Right cardiac atrium (tissue), 5 donors: ENCODE measurements at regions of chr2 and their contacts with region 1.

Region 1: DNA sequence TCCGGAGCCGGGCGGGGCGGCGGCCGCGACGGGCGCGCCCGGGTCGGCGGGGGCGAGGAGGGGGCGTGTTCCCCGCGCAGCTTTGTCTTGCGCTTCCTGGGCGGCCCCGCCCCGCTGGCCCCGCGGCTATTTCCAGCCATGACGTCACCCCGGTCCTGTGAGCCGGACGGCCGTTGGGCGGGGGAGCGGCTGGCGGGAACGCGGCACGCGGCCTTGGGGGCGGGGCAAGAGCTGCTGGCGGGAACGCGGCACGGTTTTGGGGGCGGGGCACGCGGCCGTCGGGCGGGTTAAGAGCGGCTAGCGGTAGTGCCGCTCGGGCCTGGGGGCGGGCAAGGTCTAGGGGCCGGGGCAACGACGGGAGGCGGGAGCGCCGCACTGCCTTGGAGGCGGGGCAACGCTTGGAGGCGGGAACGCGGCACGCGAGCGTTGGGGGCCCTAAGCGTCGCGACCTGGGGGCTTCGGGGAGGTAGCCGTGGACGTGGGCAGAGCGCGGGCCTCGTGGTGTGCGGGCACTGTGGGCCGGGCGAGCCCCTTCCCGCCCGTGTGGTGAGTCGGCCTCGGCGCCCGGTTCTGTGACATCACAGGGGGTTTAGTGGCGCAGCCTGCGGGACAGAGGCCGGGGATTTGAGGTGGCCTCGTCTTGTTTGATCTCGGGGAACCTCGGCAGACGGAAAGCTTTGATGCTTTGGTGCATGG is 704 bp downstream of the KLF11 start:
- DNase-seq: peak; percentile 99 to 100 (median 100)
- ATAC-seq: peak; percentile 85
- H3K4me3 ChIP-seq: peak overlapping the region; percentile 97
- H3K27ac ChIP-seq: peak overlapping the region; percentile 100
- H3K4me1 ChIP-seq: peaks cover 14% of the 10 kb centered on the region
- H3K27me3 ChIP-seq: no peaks in the 10 kb centered on the region

Region 2: GRCh38 chr2:9813312-9814133 is 230.5 kb before region 1 on chr2:
- intact Hi-C with region 1: loop called in 3 of 4 experiments (anchors 5 to 10 kb)
- DNase-seq: peak; percentile 74 to 91 (median 91)
- ATAC-seq: peak; percentile 80 to 88
- H3K4me3 ChIP-seq: no peak overlapping the region
- H3K27ac ChIP-seq: no peak overlapping the region
- H3K4me1 ChIP-seq: no peaks in the 10 kb centered on the region
- H3K27me3 ChIP-seq: no peaks in the 10 kb centered on the region

Region 3: GRCh38 chr2:9984217-9984739 is 59.8 kb before region 1 on chr2:
- intact Hi-C with region 1: loop called in 2 of 4 experiments (anchors 2 to 5 kb)
- DNase-seq: no peak
- ATAC-seq: peak; percentile 48 to 60
- H3K4me3 ChIP-seq: no peak overlapping the region
- H3K27ac ChIP-seq: no peak overlapping the region
- H3K4me1 ChIP-seq: no peaks in the 10 kb centered on the region
- H3K27me3 ChIP-seq: no peaks in the 10 kb centered on the region

Region 4: GRCh38 chr2:9990735-9991134 is 53.3 kb before region 1 on chr2:
- intact Hi-C with region 1: loop called in 3 of 4 experiments (anchors 2 to 5 kb)
- DNase-seq: peak; percentile 68 to 85 (median 82)
- ATAC-seq: peak; percentile 32 to 59
- H3K4me3 ChIP-seq: no peak overlapping the region
- H3K27ac ChIP-seq: no peak overlapping the region
- H3K4me1 ChIP-seq: peaks cover 7% of the 10 kb centered on the region
- H3K27me3 ChIP-seq: no peaks in the 10 kb centered on the region

Region 5: DNA sequence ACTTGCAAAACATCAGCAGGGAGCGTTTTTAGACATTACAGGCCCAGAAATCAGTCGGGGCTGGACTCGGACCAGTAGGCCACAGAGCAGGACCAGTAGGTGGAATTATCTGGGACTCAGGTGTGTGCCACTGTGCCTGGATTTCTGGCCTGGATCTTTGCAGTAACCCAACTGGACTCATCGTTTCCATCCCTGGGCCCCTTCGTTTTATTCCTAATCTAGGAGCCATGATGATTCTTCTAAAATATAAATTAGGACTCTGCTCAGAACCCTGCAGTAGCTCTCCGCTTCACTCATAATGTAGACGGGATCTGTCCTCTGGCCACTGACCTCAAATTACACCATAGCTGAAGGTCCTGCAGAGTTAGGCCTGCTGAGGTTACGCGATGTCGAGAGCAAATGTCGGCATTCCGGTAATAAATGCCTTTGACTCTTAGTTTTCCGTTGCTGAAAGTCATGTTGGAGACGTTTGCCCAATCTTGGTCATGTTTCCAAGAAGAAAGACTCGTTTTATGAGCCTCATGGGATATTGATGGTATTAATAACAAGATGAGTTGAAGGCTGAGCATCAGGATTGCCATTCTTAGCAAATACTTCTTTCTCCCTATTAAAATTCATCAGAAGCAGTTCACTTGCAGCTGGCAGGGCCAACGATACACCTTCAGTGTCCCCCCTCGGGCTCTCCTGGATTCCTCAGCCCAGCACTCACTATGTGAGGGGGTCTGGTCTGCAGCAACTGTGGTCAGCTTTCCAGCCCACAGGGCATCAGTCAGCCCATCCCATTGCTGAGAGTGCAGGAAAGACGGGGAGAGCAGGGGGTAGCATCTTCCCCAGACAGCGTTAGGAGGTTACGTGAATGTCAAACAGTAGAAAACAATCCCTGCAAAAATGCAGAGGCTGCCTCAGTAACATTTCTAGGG is 40.6 kb before region 1 on chr2:
- intact Hi-C with region 1: loop called in 2 of 4 experiments (anchors 5 kb)
- DNase-seq: no peak
- ATAC-seq: no peak
- H3K4me3 ChIP-seq: no peak overlapping the region
- H3K27ac ChIP-seq: no peak overlapping the region
- H3K4me1 ChIP-seq: peaks cover 4% of the 10 kb centered on the region
- H3K27me3 ChIP-seq: no peaks in the 10 kb centered on the region

Region 6: GRCh38 chr2:10097352-10098148 is 53.5 kb after region 1 on chr2:
- intact Hi-C with region 1: no loop called
- DNase-seq: peak; percentile 74 to 89 (median 87)
- ATAC-seq: peak; percentile 89 to 94
- H3K4me3 ChIP-seq: no peak overlapping the region
- H3K27ac ChIP-seq: no peak overlapping the region
- H3K4me1 ChIP-seq: no peaks in the 10 kb centered on the region
- H3K27me3 ChIP-seq: no peaks in the 10 kb centered on the region